MCF 10A (cell line): ENCODE measurements at regions of chr5 and their contacts with region 1.

Region 1: GRCh38 chr5:160418561-160419457 is at the start of gene SLU7:
- DNase-seq: peak; percentile 98
- H3K4me3 Mint-ChIP-seq: peak within 1 kb of the TSS; percentile 99
- H3K27ac Mint-ChIP-seq: peak within 1 kb of the TSS; percentile 99
- H3K4me1 Mint-ChIP-seq: peaks cover 43% of the 10 kb centered on the region
- H3K27me3 Mint-ChIP-seq: no peaks in the 10 kb centered on the region
- CTCF ChIP-seq: no peak
- total RNA-seq, gene SLU7: 64.6 and 85.6 TPM in 2 replicates

Region 2: GRCh38 chr5:160008877-160009590 is 409.8 kb before region 1 on chr5 and contains the start of gene TTC1:
- CTCF ChIA-PET with region 1: no interaction called
- POLR2A ChIA-PET with region 1: interaction called, 12 read pairs
- intact Hi-C with region 1: no loop called
- DNase-seq: peak; percentile 100
- H3K4me3 Mint-ChIP-seq: peak within 1 kb of the TSS; percentile 92
- H3K27ac Mint-ChIP-seq: peak within 1 kb of the TSS; percentile 98
- H3K4me1 Mint-ChIP-seq: peaks cover 19% of the 10 kb centered on the region
- H3K27me3 Mint-ChIP-seq: no peaks in the 10 kb centered on the region
- CTCF ChIP-seq: no peak
- total RNA-seq, gene TTC1: 84.6 and 100 TPM in 2 replicates

Region 3: GRCh38 chr5:160357861-160358411 is 60.9 kb before region 1 on chr5:
- CTCF ChIA-PET with region 1: no interaction called
- POLR2A ChIA-PET with region 1: no interaction called
- intact Hi-C with region 1: no loop called
- DNase-seq: no peak
- H3K4me3 Mint-ChIP-seq: no peak overlapping the region
- H3K27ac Mint-ChIP-seq: no peak overlapping the region
- H3K4me1 Mint-ChIP-seq: peaks cover 7% of the 10 kb centered on the region
- H3K27me3 Mint-ChIP-seq: no peaks in the 10 kb centered on the region
- CTCF ChIP-seq: no peak

Region 4: GRCh38 chr5:160399402-160400353 is 19.1 kb before region 1 on chr5 and contains the start of gene FAM200C:
- CTCF ChIA-PET with region 1: interaction called, 4 read pairs
- POLR2A ChIA-PET with region 1: interaction called, 272 read pairs
- intact Hi-C with region 1: no loop called
- DNase-seq: peak; percentile 97
- H3K4me3 Mint-ChIP-seq: peak within 1 kb of the TSS; percentile 85
- H3K27ac Mint-ChIP-seq: peak within 1 kb of the TSS; percentile 94
- H3K4me1 Mint-ChIP-seq: peaks cover 14% of the 10 kb centered on the region
- H3K27me3 Mint-ChIP-seq: no peaks in the 10 kb centered on the region
- CTCF ChIP-seq: no peak
- total RNA-seq, gene FAM200C: 2.2 and 3.7 TPM in 2 replicates

Region 5: DNA sequence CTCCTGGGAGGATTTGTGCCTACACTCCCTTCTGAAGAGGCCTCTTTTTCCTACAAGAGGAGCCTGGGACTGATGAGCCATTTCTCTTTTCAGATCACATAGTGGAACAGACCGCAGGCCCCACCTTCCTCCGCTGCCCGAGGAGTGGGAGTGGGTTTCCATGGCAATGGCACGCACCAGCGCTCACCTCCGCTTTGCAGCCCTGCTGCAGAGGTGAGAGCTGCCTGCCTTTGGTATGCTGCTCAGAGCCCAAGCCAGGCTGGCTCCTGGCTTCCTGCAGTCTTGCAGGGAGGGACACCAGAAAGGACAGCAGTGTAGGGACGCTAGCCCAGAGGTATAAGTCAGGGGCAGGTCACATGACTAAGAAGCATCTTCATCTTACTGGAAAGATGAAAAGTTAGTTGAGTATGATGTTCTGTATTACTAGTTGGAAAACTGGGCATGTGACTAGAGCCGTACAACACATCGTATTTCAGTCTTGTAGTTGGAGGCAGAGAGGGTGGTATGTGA is 15.3 kb after region 1 on chr5:
- CTCF ChIA-PET with region 1: interaction called, 197 read pairs
- POLR2A ChIA-PET with region 1: interaction called, 43 read pairs
- intact Hi-C with region 1: no loop called
- DNase-seq: peak; percentile 63
- H3K4me3 Mint-ChIP-seq: no peak overlapping the region
- H3K27ac Mint-ChIP-seq: no peak overlapping the region
- H3K4me1 Mint-ChIP-seq: peaks cover 18% of the 10 kb centered on the region
- H3K27me3 Mint-ChIP-seq: peaks cover 13% of the 10 kb centered on the region
- CTCF ChIP-seq: no peak

Region 6: DNA sequence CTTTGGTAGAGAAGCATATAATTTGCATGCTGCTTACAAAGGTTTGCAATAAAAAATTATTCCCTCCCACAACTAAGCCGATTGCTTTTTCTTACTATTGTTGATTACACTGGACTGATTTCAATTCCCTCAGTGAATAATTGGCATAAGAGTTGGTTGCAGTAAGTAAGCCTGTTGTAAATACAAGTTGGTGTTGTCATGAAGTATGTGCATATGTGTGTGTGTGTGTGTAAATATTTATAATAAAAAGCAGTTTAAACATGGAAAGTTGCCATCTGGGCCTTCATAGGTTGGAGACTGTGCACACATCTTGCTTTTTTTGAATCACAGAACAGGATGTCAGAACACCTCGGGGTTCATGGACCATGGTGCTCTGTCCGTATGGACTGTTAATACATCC is 302.0 kb after region 1 on chr5:
- CTCF ChIA-PET with region 1: no interaction called
- POLR2A ChIA-PET with region 1: no interaction called
- intact Hi-C with region 1: no loop called
- DNase-seq: no peak
- H3K4me3 Mint-ChIP-seq: no peak overlapping the region
- H3K27ac Mint-ChIP-seq: no peak overlapping the region
- H3K4me1 Mint-ChIP-seq: no peaks in the 10 kb centered on the region
- H3K27me3 Mint-ChIP-seq: no peaks in the 10 kb centered on the region
- CTCF ChIP-seq: no peak

Region 7: DNA sequence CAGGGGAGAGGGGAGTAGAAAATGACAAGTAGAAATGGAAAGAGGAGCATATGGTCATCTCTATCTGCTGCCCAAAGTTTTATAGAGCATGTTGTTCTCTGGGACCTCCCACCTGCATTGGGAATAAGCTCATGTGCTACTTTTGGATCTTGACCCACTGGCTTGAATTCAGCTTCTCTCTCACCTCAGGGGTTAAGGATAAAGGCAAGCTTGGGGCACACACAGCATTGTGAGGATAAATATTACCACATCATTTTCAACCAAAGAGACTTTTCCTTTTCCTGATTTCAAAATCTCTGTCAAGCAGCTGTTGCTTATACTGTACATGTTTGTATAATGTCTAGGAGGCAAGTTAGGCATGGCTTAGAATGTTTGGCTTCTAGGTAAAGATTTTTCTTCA is 416.6 kb after region 1 on chr5:
- CTCF ChIA-PET with region 1: no interaction called
- POLR2A ChIA-PET with region 1: interaction called, 6 read pairs
- intact Hi-C with region 1: loop called (anchors 5 kb)
- DNase-seq: peak; percentile 19
- H3K4me3 Mint-ChIP-seq: no peak overlapping the region
- H3K27ac Mint-ChIP-seq: no peak overlapping the region
- H3K4me1 Mint-ChIP-seq: peaks cover 41% of the 10 kb centered on the region
- H3K27me3 Mint-ChIP-seq: no peaks in the 10 kb centered on the region
- CTCF ChIP-seq: no peak